Activated B cell treated with CpG ODN at 0.5 μM for 24 hours (primary cell): ENCODE measurements at regions of chr19 and their contacts with region 1.

Region 1: GRCh38 chr19:47284324-47284899 is 9.7 kb downstream of the INAFM1 start:
- DNase-seq: no peak
- ATAC-seq: no peak
- H3K4me3 Mint-ChIP-seq: no peak overlapping the region
- H3K27ac Mint-ChIP-seq: no peak overlapping the region
- H3K4me1 Mint-ChIP-seq: peaks cover 20% of the 10 kb centered on the region
- H3K27me3 Mint-ChIP-seq: no peaks in the 10 kb centered on the region
- CTCF ChIP-seq: no peak

Region 2: DNA sequence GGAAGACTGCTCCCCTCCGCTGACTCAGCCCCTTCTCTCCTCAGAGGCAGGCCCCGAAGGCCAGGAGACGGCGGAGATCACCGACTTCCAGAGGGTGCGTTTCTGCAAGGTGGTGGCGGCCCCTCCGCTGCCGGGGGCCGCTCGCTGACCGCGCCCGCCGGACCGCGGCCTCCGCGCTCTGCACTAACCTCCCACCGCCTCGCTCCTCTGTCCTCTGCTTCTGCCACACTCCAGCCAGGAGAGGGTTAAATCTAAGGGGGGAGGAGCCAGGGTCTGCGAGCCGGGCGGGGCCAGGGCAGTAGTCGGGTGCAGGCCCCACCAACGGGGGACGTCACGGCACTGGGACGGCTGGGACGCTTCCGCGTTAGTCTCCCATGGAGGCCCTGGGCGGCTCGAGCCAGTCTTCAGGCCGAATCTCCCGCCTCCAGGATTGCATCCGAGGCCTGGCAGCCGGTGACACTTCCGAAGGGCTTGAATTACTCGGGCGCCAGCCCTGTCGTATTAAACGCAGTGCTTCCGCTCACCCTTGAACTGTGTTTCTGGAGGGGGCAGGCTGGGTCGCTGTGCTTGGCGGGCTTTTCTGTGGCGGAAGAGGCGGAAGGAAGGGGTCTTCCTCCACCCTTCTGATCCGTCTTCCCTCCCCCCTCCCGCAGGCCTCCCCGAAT is 11.0 kb before region 1 on chr19:
- CTCF ChIA-PET with region 1: interaction called, 11 read pairs
- POLR2A ChIA-PET with region 1: interaction called, 20 read pairs
- intact Hi-C with region 1: loop called (anchors 1 kb)
- DNase-seq: peak; percentile 83
- ATAC-seq: peak; percentile 54
- H3K4me3 Mint-ChIP-seq: peak overlapping the region; percentile 96
- H3K27ac Mint-ChIP-seq: peak overlapping the region; percentile 97
- H3K4me1 Mint-ChIP-seq: peaks cover 27% of the 10 kb centered on the region
- H3K27me3 Mint-ChIP-seq: no peaks in the 10 kb centered on the region
- CTCF ChIP-seq: no peak

Region 3: DNA sequence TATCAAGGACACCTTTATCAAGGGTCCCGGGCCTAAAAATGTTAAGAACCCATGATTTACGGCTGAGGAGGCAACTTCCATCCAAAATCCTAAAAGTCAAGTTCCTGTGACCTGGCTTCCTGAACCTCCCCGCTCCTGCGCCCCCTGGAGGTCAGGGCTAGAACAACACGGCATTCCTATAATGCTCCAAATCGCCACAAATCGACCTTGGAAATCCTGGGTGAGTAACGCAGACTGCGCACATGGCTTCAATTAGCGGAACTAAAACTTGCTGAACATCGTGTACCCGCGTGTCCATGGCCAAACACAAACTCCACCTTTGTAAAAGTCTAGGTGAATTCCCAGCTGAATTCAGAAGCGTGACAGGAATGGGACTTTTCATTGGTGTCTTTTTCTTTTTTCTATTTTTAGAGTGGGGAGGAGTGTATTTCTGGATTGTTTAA is 20.9 kb after region 1 on chr19:
- CTCF ChIA-PET with region 1: interaction called, 8 read pairs
- POLR2A ChIA-PET with region 1: no interaction called
- intact Hi-C with region 1: loop called (anchors 2 kb)
- DNase-seq: peak; percentile 42
- ATAC-seq: no peak
- H3K4me3 Mint-ChIP-seq: peak overlapping the region; percentile 35
- H3K27ac Mint-ChIP-seq: peak overlapping the region; percentile 1
- H3K4me1 Mint-ChIP-seq: peaks cover 24% of the 10 kb centered on the region
- H3K27me3 Mint-ChIP-seq: peaks cover 13% of the 10 kb centered on the region
- CTCF ChIP-seq: peak; percentile 61

Region 4: DNA sequence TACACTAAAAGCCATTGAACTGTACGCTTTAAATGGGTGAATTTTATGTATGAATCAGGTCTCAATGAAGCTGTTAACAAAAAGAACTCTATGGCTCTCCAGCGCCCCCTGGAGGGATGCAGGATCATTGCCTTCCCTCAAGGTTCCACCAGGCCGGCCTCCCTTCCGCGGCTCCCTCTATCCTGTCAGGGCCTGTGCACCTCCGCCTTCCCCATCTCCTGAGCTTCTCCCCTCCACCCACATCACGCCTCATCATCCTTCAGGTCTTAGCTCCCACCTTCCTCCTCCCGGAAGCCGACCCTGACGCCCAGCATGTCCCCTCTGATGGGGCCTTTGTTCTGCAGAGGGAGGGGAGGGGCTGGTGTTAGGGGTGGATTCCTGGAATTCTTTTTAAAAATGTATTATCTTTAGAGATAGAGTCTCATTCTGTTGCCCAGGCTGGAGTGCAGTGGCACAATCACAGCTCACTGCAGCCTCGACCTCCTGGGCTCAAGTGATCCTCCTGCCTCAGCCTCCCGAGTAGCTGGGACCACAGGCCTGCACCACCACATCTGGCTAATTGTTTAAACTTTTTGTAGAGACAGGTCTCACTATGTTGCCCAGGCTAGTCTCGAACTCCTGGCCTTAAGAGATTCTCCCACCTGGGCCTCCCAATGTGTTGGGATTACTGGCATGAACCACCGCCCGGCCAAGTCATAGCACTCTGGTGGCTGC is 107.3 kb after region 1 on chr19:
- CTCF ChIA-PET with region 1: interaction called, 8 read pairs
- POLR2A ChIA-PET with region 1: interaction called, 3 read pairs
- intact Hi-C with region 1: loop called (anchors 1 kb)
- DNase-seq: peak; percentile 60
- ATAC-seq: peak; percentile 93
- H3K4me3 Mint-ChIP-seq: no peak overlapping the region
- H3K27ac Mint-ChIP-seq: no peak overlapping the region
- H3K4me1 Mint-ChIP-seq: peaks cover 8% of the 10 kb centered on the region
- H3K27me3 Mint-ChIP-seq: peaks cover 6% of the 10 kb centered on the region
- CTCF ChIP-seq: no peak

Region 5: DNA sequence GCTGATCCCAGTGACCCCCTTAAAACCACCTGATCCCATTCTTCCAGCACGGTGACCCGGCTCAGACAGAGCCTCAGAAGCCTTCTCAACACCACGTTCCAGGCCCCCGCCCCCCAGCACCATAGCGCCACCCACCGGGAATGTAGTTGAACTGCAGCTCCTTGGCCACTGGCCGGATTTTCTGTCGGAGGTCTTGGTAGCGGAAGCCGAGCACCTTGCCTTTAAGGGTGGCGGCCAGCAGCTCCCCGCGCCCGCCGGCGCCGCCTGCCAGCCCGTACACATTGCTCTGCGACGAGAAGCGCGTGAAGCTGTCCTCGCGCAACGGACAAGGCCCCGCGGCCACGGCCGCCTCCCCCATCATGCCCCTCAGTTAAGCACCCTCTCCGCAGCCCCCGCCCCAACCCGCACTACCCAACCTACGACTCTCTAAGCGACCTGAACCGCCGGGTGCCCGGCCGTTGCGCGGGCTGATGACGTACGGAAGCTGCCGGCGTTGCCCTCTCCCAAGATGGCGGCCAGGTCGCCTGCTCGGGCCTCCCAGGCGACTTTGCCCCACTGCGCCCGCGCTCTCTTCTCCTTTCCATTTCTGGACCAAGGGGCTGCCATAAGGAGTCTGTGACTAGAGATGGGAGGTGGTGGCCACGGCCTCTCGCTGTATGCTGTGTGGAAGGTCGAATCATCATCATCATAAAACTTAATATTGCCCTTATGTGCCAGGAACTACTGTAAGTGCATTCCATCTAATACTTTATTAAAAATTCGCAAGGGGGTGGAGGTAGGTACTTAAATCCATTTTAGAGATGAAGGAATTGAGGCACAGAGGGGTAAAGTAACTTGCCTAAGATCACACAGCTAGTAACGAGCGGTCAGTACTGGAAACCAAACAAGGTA is 199.6 kb after region 1 on chr19 and contains the start of gene KPTN:
- CTCF ChIA-PET with region 1: no interaction called
- POLR2A ChIA-PET with region 1: no interaction called
- intact Hi-C with region 1: loop called (anchors 5 kb)
- DNase-seq: peak; percentile 85
- ATAC-seq: peak; percentile 87
- H3K4me3 Mint-ChIP-seq: peak within 1 kb of the TSS; percentile 98
- H3K27ac Mint-ChIP-seq: peak within 1 kb of the TSS; percentile 99
- H3K4me1 Mint-ChIP-seq: peaks cover 42% of the 10 kb centered on the region
- H3K27me3 Mint-ChIP-seq: no peaks in the 10 kb centered on the region
- CTCF ChIP-seq: no peak
- total RNA-seq, gene KPTN: 8.0 and 8.7 TPM in 2 replicates